A549 (cell line): ENCODE measurements at regions of chr14 and their contacts with region 1.

Region 1: DNA sequence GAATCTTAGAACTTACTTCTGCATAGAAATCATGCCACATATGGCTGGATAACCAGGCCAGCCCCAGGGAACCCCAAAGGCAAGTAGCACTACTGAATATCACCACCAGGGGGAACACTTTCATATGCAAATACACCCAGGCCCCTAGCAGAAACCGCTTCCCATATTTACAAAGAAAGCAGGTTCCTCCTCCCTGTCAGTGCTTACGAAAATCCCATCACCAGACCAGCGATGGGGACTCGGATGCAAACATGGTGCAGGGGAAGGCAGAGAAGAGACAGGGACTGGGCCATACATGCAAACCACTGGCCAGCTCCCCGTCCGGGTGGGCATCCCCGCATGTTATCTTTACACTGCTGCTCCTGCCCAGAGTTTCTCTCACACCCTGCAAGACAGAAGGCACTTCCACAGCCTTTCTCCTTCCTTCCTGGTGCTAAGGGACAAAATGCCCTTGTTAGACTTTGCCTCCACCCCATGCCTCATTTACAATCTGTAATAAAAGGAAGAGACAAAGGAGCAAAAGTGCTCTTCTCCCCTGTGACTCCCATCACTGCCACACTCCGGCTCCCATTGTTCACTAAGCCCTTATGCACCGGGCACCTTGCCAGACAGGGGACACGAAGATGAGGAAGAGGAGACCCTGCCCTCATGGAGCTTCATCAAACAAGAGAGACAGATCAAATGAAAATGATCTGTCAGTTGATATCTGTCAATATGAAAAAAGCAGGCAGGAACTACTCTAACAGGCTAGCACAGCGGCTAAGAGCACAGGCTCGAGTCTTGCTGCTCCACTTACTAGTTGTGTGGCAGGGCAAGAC is 62.3 kb downstream of the PTPN21 start:
- DNase-seq: peak; percentile 79 to 81
- ATAC-seq: peak; percentile 87 to 97
- H3K4me3 ChIP-seq: no peak overlapping the region
- H3K27ac ChIP-seq: no peak overlapping the region
- H3K4me1 ChIP-seq: no peaks in the 10 kb centered on the region
- CTCF ChIP-seq: peak; percentile 80
- EP300 ChIP-seq: no peak
- POLR2A ChIP-seq: no peak
- RAD21 ChIP-seq: peak; percentile 71 to 80

Region 2: DNA sequence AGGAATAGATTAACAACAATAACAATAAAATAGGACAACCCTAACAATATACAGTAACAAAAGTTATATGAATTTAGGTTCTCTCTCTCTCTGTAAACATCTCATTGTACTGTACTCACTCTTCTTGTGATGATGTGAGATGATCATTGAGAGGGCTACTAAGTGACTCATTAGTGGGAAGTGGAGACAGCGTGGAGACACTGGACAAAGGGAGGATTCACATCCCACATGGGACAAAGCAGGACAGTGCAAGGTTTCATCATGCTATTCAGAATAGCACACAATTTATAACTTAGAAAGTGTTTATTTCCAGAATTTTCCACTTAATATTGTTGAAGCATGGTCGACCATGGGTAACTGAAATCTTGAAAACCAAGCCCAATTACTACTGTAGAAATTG is 133.0 kb before region 1 on chr14:
- CTCF ChIA-PET with region 1: no interaction called
- POLR2A ChIA-PET with region 1: no interaction called
- DNase-seq: no peak
- ATAC-seq: no peak
- H3K4me3 ChIP-seq: no peak overlapping the region
- H3K27ac ChIP-seq: no peak overlapping the region
- H3K4me1 ChIP-seq: no peaks in the 10 kb centered on the region
- CTCF ChIP-seq: no peak
- EP300 ChIP-seq: no peak
- POLR2A ChIP-seq: no peak
- RAD21 ChIP-seq: no peak

Region 3: DNA sequence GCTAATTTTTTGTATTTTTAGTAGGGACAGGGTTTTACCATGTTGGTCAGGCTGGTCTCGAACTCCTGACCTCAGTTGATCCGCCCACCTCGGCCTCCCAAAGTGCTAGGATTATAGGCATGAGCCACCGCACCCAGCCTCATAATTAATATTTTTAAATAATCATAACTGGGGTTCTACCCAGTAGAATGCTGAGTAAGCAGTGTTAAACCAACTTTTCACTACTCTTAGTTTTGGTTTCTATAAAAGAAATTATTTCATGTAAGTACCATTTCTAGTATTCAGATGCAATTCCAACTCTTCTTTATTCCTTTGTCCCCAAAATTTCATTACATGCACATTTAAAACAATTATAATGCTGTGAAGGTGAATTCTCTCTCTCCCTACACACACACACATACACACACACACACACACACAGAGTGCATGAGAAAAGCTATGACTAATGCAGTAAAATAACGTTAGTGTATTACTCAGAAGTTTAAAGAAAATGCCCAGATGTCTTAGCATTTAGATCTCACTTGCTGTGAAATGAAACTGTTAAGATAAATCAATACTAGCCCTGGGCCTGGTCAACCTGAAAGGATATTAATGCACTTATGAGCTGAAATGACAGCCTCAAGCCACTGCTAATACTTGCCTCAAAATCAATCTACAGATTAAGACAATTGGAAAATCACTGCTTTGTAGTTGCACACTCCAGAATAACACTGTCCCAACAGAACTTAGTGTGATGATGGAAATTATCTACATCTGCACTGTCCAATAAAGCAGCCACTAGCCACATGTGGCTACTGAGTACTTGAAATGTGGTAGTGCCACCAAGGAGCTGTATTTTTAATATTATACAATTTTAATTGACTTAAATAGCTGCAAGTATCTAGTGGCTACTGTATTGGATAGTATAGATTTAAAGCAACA is 26.4 kb after region 1 on chr14:
- CTCF ChIA-PET with region 1: interaction called, 11 read pairs
- POLR2A ChIA-PET with region 1: no interaction called
- DNase-seq: peak in 1 of 2 experiments; percentile 15
- ATAC-seq: no peak
- H3K4me3 ChIP-seq: no peak overlapping the region
- H3K27ac ChIP-seq: no peak overlapping the region
- H3K4me1 ChIP-seq: peaks cover 24% of the 10 kb centered on the region
- CTCF ChIP-seq: no peak
- EP300 ChIP-seq: no peak
- POLR2A ChIP-seq: no peak
- RAD21 ChIP-seq: no peak

Region 4: DNA sequence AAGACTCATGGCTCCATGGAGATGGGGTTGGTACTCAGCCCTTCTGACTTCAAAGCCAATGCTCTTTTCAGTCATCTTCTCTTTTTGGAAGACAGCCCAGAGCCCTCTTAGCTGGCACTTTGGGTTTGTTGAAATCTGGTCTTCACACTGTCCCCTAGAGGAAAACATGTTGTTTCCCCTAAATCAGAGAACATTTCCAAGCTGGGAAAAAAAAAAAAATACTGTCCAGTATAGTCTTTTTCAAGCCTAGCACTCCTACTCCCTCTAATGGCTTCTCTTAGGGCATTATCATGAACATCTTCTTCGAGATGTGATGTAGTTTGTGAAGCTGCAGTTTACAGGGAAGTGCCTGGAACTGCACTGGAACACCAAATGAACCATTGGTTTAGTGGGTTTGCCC is 67.4 kb after region 1 on chr14:
- CTCF ChIA-PET with region 1: interaction called, 40 read pairs
- POLR2A ChIA-PET with region 1: no interaction called
- DNase-seq: peak in 1 of 2 experiments; percentile 74
- ATAC-seq: peak; percentile 37 to 48; a peak in 5 of 6 replicates
- H3K4me3 ChIP-seq: no peak overlapping the region
- H3K27ac ChIP-seq: no peak overlapping the region
- H3K4me1 ChIP-seq: peaks cover 22% of the 10 kb centered on the region
- CTCF ChIP-seq: peak; percentile 54
- EP300 ChIP-seq: no peak
- POLR2A ChIP-seq: no peak
- RAD21 ChIP-seq: peak; percentile 61 to 69

Region 5: DNA sequence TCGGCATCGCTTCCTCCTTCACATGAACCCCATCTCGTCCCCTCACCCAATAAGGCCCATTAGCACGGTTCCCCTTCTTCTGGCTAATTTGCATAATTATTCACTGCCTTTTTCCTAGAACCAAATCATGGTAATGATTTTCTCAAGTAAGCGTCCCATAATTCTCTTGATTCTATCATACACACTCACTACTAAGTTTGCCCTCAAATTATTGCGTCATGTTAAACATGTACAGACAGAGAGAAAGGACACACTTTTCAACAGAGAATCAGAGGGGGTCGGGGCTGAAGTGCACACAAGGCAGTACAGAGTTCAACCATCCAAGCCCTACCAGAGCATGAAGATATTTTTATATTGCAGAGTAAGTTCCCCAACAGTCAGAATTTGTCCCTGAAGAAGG is 668.0 kb after region 1 on chr14:
- CTCF ChIA-PET with region 1: no interaction called
- POLR2A ChIA-PET with region 1: no interaction called
- DNase-seq: no peak
- ATAC-seq: no peak
- H3K4me3 ChIP-seq: no peak overlapping the region
- H3K27ac ChIP-seq: no peak overlapping the region
- H3K4me1 ChIP-seq: no peaks in the 10 kb centered on the region
- CTCF ChIP-seq: no peak
- EP300 ChIP-seq: no peak
- POLR2A ChIP-seq: no peak
- RAD21 ChIP-seq: no peak